Mammary epithelial cell (primary cell): ENCODE measurements at regions of chr7 and their contacts with region 1.

Region 1: DNA sequence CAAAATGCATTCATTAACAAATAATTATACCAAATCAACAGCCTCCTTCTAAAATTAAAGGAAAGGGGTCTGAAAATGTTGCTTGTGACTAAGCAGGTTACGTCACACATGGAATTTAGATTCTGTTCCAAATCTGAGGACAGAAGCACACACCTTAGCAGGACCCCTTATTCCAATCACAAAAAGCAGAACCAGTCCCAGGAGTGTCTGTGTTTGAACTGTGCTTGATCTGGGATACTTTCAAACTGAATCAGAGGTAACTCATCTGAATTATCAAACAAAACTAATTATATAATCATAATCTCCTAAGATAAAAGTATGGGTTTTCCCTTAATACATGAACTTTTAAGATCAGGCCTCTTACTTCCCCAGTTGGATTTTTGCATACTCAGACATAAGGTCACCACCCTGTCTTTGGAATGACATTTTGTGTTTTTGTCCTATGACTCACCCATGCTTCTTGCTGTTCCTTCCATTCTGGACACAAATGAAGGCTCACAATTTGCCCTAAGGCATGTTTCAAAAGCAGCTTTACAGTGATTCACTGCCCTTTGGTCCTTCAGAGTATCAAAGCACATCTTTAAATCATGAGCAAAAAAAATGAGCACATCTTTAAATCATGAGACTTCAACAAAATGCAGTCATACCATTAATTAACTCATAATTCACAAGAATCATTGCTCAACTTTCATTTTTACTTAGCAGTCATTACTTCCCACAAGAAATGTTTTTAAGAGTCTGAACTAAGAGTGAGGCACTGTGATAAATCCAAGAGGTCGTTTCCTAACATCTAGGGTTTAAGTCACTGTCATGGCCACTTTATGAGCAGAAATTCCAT is 35.4 kb downstream of the SEMA3C start:
- DNase-seq: peak; percentile 100
- H3K4me3 ChIP-seq: peak overlapping the region in 1 of 3 experiments; percentile 17
- H3K27ac ChIP-seq: peak overlapping the region; percentile 86
- H3K4me1 ChIP-seq: peaks cover 19% of the 10 kb centered on the region
- H3K27me3 ChIP-seq: no peaks in the 10 kb centered on the region
- CTCF ChIP-seq: no peak

Region 2: GRCh38 chr7:79504712-79505389 is 1378.6 kb before region 1 on chr7:
- CTCF ChIA-PET with region 1: interaction called, 16 read pairs
- dilution Hi-C with region 1: no loop called
- in situ Hi-C with region 1: no loop called
- intact Hi-C with region 1: no loop called
- DNase-seq: no peak
- H3K4me3 ChIP-seq: no peak overlapping the region
- H3K27ac ChIP-seq: no peak overlapping the region
- H3K4me1 ChIP-seq: peaks cover 7% of the 10 kb centered on the region
- H3K27me3 ChIP-seq: no peaks in the 10 kb centered on the region
- CTCF ChIP-seq: no peak

Region 3: DNA sequence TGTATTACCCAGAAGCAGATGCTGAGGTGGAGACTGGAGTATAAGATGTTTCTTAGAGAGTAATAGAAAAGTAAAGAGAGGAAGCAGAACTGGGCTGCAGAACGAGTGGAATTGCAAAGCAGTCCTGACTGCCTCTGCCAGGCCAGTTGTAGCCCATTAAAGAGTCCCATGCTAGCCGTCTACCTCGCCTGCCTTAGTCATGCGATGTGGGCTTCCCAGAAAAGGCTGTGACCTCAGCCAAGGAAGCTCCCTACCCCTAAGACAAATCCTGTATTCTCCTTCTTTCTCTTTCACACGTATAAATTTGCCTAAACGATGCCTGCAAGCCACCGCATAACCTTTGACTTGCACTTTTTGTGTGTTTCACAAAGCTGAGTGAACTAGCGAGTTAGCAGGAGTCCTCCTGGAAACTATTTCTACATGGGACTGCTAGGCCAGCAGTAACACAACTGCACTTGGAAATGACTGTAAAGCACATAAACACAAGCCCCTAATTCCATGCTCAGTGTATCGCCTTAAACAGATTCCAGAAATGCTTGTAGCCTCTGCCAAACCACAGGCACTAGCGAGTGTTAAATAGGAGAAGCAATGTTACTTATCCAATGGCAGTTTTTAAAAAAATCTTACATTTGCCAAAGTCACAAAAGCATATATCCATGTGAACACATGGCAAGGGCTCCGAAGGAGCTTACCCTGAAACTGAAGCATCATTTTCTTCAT is 796.2 kb before region 1 on chr7:
- CTCF ChIA-PET with region 1: no interaction called
- dilution Hi-C with region 1: no loop called
- in situ Hi-C with region 1: no loop called
- intact Hi-C with region 1: no loop called
- DNase-seq: no peak
- H3K4me3 ChIP-seq: no peak overlapping the region
- H3K27ac ChIP-seq: no peak overlapping the region
- H3K4me1 ChIP-seq: peaks cover 14% of the 10 kb centered on the region
- H3K27me3 ChIP-seq: no peaks in the 10 kb centered on the region
- CTCF ChIP-seq: no peak

Region 4: GRCh38 chr7:80186721-80187120 is 696.7 kb before region 1 on chr7:
- CTCF ChIA-PET with region 1: no interaction called
- dilution Hi-C with region 1: no loop called
- in situ Hi-C with region 1: no loop called
- intact Hi-C with region 1: no loop called
- DNase-seq: no peak
- H3K4me3 ChIP-seq: no peak overlapping the region
- H3K27ac ChIP-seq: no peak overlapping the region
- H3K4me1 ChIP-seq: peaks cover 5% of the 10 kb centered on the region
- H3K27me3 ChIP-seq: no peaks in the 10 kb centered on the region
- CTCF ChIP-seq: no peak

Region 5: GRCh38 chr7:80825499-80825898 is 57.9 kb before region 1 on chr7:
- CTCF ChIA-PET with region 1: no interaction called
- dilution Hi-C with region 1: no loop called
- in situ Hi-C with region 1: no loop called
- intact Hi-C with region 1: loop called (anchors 2 kb)
- DNase-seq: no peak
- H3K4me3 ChIP-seq: peak overlapping the region in 1 of 3 experiments; percentile 14
- H3K27ac ChIP-seq: peak overlapping the region; percentile 65
- H3K4me1 ChIP-seq: peaks cover 64% of the 10 kb centered on the region
- H3K27me3 ChIP-seq: no peaks in the 10 kb centered on the region
- CTCF ChIP-seq: no peak

Region 6: DNA sequence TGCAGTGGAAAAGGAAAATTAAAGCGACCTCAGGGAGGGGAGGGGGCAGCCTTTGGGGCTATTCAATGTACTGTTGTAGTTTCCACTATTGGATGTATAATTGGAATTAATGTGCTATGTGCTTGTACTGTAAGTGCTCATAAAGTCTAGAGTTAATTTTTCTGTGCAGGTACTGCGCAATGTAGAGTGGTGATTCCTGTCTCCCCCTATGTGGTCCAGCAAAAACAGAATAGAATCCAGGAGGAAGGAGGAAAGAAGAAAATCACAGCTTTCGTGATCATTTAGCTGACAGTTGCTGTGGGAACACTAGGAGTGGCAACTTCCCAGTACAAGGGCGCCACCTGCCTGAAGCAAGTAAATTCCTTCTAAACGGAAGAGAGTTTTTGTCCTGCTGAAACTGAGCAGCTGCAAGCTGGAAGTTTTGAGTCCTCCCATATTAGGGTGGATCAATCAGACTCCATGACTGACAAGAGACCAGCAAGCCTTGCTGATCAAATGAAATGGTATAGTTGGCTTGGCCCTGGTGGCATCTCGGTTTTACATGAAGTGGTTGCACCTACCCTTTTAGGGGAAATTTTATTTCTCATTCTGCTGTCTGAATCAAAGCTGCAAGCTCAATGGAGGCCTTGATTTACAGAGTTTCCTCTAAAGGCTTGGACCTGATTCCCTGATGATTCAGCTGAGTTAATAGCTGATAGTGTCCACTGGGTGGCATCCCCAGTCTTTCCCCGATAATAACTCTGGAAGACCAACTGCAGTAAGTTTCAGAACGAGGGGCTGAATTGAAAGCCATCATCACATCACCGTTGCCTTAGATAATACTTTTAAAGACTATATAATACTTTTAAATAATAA is 586.7 kb after region 1 on chr7:
- CTCF ChIA-PET with region 1: interaction called, 23 read pairs
- dilution Hi-C with region 1: no loop called
- in situ Hi-C with region 1: no loop called
- intact Hi-C with region 1: no loop called
- DNase-seq: peak; percentile 51
- H3K4me3 ChIP-seq: no peak overlapping the region
- H3K27ac ChIP-seq: no peak overlapping the region
- H3K4me1 ChIP-seq: peaks cover 2% of the 10 kb centered on the region
- H3K27me3 ChIP-seq: no peaks in the 10 kb centered on the region
- CTCF ChIP-seq: peak; percentile 70 to 82